Sciatic nerve (tissue), 2 donors: ENCODE measurements at regions of chr4 and their contacts with region 1.

Region 1: GRCh38 chr4:25144870-25145481 is 15.3 kb downstream of the SEPSECS start:
- DNase-seq: no peak
- ATAC-seq: no peak

Region 2: DNA sequence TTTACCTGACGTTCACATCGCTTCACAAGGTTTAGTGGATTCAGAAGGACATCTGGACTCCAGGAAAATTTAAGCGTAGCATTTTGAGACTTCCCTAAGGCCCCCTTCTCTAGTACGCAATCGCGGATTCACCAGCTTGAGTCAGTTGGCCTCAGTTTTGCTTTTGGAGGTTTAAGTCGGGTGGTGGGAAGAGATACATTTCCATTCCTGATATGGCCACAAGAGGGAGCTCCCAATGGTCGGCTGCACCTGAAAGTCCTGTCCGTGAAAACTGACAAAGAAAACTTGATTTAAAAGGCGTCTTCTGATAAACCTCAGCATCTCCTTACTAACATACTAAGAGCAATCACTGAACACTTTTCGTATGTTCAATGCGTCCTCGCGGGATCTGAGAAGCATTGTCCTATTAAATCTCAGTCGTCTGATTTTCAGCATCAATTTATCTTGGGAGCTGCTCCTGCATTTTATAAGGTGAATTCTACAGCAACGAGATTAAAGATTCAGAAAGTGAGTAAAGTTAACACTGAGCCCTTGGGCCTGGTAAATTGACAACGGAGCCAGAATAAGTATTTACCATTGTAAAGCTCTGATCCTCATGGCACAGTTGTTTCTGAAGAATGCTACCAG is 164.8 kb before region 1 on chr4:
- intact Hi-C with region 1: loop called (anchors 10 kb)
- DNase-seq: peak; percentile 73
- ATAC-seq: peak; percentile 84